ENCODE measurements at regions of chr2 and their contacts with region 1.

Region 1: GRCh38 chr2:163345908-163346573 is 389.8 kb downstream of the FIGN start:
- DNase-seq: no peak
- H3K4me3 ChIP-seq: no peak overlapping the region
- H3K27ac ChIP-seq: no peak overlapping the region
- H3K4me1 ChIP-seq: peaks cover 22% of the 10 kb centered on the region
- H3K27me3 ChIP-seq: no peaks in the 10 kb centered on the region
- CTCF ChIP-seq: peak; percentile 89

Region 2: GRCh38 chr2:163735685-163736432 is 389.8 kb after region 1 on chr2 and contains the start of gene FIGN:
- intact Hi-C with region 1: loop called (anchors 10 kb)
- DNase-seq: peak; percentile 81
- H3K4me3 ChIP-seq: peak within 1 kb of the TSS; percentile 77
- H3K27ac ChIP-seq: peak within 1 kb of the TSS; percentile 96
- H3K4me1 ChIP-seq: peaks cover 28% of the 10 kb centered on the region
- H3K27me3 ChIP-seq: peaks cover 13% of the 10 kb centered on the region
- CTCF ChIP-seq: no peak
- total RNA-seq, gene FIGN: 12.9 TPM

Region 3: GRCh38 chr2:164061129-164061746 is 715.2 kb after region 1 on chr2:
- intact Hi-C with region 1: loop called (anchors 10 kb)
- DNase-seq: no peak
- H3K4me3 ChIP-seq: no peak overlapping the region
- H3K27ac ChIP-seq: no peak overlapping the region
- H3K4me1 ChIP-seq: no peaks in the 10 kb centered on the region
- H3K27me3 ChIP-seq: no peaks in the 10 kb centered on the region
- CTCF ChIP-seq: peak; percentile 68

Measured in left ventricle myocardium inferior (tissue), 1 donor.